Common myeloid progenitor, CD34-positive (primary cell): ENCODE measurements at regions of chr1 and their contacts with region 1.

Region 1: DNA sequence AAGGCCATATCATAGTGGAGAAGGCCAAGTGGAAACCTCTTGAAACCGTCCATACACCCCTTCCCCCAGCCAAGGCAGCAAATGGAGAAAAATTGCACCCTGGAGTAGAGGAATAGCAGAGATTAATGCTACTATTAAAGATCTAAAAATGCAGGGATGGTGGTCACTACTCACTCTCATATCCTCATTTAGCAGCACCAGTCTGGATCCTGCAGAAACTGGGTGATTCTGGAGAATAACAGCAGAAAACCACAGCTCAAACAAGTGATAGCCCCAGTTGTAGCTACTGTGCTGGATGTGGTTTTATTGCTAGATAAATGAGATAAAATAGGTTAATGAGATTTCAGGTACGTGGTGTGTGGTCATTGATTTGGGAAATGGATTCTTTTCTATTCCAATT is 30.3 kb downstream of the S1PR1 start:
- DNase-seq: no peak
- H3K4me3 ChIP-seq: no peak overlapping the region
- H3K27ac ChIP-seq: no peak overlapping the region
- H3K4me1 ChIP-seq: peaks cover 17 to 33% (median 30%) of the 10 kb centered on the region in 4 experiments
- H3K27me3 ChIP-seq: no peaks in the 10 kb centered on the region

Region 2: GRCh38 chr1:101161619-101162018 is 105.5 kb before region 1 on chr1:
- CTCF ChIA-PET with region 1: no interaction called
- POLR2A ChIA-PET with region 1: no interaction called
- DNase-seq: no peak
- H3K4me3 ChIP-seq: no peak overlapping the region
- H3K27ac ChIP-seq: no peak overlapping the region
- H3K4me1 ChIP-seq: peaks cover 0 to 7% (median 1%) of the 10 kb centered on the region in 4 experiments
- H3K27me3 ChIP-seq: no peaks in the 10 kb centered on the region

Region 3: DNA sequence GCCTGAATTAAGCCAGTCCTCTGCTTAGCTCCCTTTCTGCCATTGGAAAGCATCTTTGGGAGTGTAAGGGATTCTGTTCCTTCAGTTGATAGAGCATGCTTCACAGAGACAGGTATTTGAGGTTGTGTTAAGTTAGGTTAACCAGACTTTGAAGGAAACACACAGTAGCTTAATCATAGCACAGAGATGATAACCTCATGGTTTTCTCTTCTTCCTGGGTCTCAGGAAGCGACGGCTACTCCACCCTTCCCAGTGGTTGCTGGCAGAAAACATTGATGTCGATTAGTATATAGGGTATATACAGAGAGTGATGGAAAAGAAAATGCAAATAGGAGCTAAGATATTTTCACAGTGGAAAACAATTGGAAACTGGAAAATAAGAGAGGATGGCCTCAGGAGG is 11.8 kb after region 1 on chr1:
- CTCF ChIA-PET with region 1: interaction called, 17 read pairs
- POLR2A ChIA-PET with region 1: no interaction called
- DNase-seq: peak in 1 of 3 donors; percentile 21
- H3K4me3 ChIP-seq: no peak overlapping the region
- H3K27ac ChIP-seq: no peak overlapping the region
- H3K4me1 ChIP-seq: peaks cover 17 to 74% (median 49%) of the 10 kb centered on the region in 4 experiments
- H3K27me3 ChIP-seq: no peaks in the 10 kb centered on the region